Dendritic cell treated with granulocyte-macrophage colony-stimulating factor and Interleukin-4, amounts not matched to agents 40 ng/mL and 50 ng/mL, for 4 days (primary cell): ENCODE measurements at regions of chr7 and their contacts with region 1.

Region 1: DNA sequence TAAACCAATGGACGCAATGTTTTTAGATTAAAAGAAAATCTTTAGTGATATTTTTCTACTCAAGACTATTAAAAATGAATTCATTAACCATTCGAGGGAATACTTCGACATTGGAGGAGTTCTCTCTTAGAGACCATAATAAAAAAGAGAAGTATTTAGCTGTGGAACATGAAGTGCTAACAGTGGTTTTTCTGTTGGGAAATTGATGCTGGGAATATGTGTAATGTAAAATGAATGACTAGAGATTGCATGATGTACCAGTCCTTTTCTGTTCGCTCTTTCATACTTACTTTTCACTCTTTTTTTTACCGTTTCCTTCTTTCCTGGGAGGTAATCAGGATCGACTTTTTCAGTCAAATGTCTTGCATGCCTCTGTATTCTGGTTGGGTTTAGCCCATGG is 41.3 kb downstream of the ST7 start:
- H3K4me3 Mint-ChIP-seq: no peak overlapping the region
- H3K27ac Mint-ChIP-seq: no peak overlapping the region
- H3K4me1 Mint-ChIP-seq: peaks cover 6% of the 10 kb centered on the region
- H3K27me3 Mint-ChIP-seq: no peaks in the 10 kb centered on the region

Region 2: GRCh38 chr7:117011419-117012260 is 17.0 kb after region 1 on chr7:
- intact Hi-C with region 1: loop called (anchors 2 kb)
- H3K4me3 Mint-ChIP-seq: peak overlapping the region; percentile 52
- H3K27ac Mint-ChIP-seq: peak overlapping the region; percentile 71
- H3K4me1 Mint-ChIP-seq: peaks cover 57% of the 10 kb centered on the region
- H3K27me3 Mint-ChIP-seq: peaks cover 9% of the 10 kb centered on the region